Activated CD4-positive, alpha-beta memory T cell treated with anti-CD3 and anti-CD28 coated beads for 36 hours (primary cell): ENCODE measurements at regions of chr4 and their contacts with region 1.

Region 1: GRCh38 chr4:147866532-147867271 is 134.8 kb downstream of the ARHGAP10 start:
- DNase-seq: peak; percentile 94
- H3K4me3 Mint-ChIP-seq: no peak overlapping the region
- H3K27ac Mint-ChIP-seq: no peak overlapping the region
- H3K4me1 Mint-ChIP-seq: peaks cover 7% of the 10 kb centered on the region
- H3K27me3 Mint-ChIP-seq: no peaks in the 10 kb centered on the region

Region 2: DNA sequence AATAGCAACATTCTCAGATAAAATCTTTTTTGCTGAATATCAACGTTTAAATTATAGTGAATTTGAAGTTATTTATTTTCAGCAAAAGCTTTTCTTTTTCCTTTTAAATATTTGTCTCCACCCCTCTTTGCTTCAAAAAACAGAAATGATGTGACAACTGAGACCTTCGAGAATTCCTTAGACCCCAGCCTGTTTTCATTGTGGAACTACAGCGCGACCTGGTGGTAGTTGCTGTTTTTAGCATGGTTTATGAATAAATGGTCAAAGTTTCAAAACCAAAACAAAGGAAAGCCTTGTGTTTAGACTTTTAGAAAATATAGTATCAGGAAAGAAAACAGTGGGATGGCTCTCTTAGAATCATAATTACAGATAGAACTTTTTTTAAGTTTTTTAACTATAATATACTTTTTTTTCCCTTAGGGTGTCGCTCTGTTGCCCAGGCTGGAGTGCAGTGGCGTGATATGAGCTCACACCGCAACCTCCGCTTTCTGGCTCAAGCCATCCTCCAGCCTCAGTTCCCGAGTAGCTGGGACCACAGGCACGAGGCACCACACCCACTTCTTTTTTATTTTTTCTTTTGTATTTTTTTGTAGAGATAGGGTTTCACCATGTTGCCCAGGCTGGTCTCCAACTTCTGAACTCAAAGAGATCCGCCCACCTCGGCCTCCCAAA is 276.3 kb before region 1 on chr4:
- CTCF ChIA-PET with region 1: interaction called, 34 read pairs
- POLR2A ChIA-PET with region 1: no interaction called
- intact Hi-C with region 1: no loop called
- DNase-seq: peak; percentile 60
- H3K4me3 Mint-ChIP-seq: no peak overlapping the region
- H3K27ac Mint-ChIP-seq: no peak overlapping the region
- H3K4me1 Mint-ChIP-seq: peaks cover 2% of the 10 kb centered on the region
- H3K27me3 Mint-ChIP-seq: peaks cover 5% of the 10 kb centered on the region

Region 3: DNA sequence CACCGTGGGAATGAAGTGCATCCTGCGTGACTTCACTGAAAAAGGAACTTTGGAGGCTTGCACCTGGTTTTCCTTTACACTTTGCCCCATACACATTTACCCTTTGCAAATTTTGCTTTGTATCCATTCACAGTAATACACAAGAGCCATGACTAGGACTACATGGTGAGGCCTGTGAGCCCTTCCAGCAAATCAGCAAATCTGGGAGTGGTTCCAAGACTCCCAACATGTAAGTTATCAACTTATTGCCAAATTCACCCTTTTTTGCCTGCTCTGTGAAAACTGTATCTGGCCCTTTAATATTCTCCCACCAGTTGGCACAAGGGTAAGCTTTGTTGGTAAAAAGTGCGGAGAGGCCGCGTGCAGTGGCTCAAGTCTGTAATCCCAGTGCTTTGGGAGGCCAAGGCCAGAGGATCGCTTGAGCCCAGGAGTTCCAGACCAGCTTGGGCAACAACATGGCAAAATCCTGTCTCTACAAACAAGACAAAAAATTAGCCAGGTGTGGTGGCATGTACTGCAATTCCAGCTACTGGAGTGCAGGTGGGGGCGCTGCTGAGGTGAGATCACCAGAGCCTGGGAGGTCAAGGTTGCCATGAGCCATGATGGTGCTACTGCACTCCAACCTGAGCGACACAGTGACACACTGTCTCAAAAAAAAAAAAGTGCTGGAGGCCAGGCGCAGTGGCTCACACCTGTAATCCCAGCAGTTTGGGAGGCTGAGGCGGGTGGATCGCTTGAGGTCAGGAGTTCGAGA is 187.7 kb before region 1 on chr4:
- CTCF ChIA-PET with region 1: interaction called, 60 read pairs
- POLR2A ChIA-PET with region 1: no interaction called
- intact Hi-C with region 1: loop called (anchors 1 kb)
- DNase-seq: peak; percentile 35
- H3K4me3 Mint-ChIP-seq: no peak overlapping the region
- H3K27ac Mint-ChIP-seq: no peak overlapping the region
- H3K4me1 Mint-ChIP-seq: peaks cover 18% of the 10 kb centered on the region
- H3K27me3 Mint-ChIP-seq: no peaks in the 10 kb centered on the region

Region 4: DNA sequence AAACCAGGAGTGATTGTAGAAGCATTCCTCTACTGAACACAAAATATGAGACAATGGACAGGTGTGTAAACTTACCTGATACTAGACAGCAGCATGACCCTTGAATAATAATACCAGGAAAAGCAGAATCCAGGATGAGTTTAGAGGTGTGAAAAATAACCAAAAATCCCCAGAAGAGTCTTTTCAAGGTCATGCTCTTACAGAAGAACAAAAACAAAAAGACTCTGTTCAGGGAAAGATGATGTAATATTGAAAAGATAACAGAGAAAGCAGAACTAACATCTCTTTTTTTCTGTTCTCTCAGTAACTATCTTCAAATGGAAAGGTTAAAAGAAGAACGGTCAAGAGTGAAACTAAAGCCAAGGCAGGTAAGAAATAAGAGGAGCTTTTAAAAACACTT is 148.8 kb before region 1 on chr4:
- CTCF ChIA-PET with region 1: interaction called, 224 read pairs
- POLR2A ChIA-PET with region 1: no interaction called
- intact Hi-C with region 1: no loop called
- DNase-seq: no peak
- H3K4me3 Mint-ChIP-seq: no peak overlapping the region
- H3K27ac Mint-ChIP-seq: no peak overlapping the region
- H3K4me1 Mint-ChIP-seq: peaks cover 4% of the 10 kb centered on the region
- H3K27me3 Mint-ChIP-seq: peaks cover 5% of the 10 kb centered on the region

Region 5: DNA sequence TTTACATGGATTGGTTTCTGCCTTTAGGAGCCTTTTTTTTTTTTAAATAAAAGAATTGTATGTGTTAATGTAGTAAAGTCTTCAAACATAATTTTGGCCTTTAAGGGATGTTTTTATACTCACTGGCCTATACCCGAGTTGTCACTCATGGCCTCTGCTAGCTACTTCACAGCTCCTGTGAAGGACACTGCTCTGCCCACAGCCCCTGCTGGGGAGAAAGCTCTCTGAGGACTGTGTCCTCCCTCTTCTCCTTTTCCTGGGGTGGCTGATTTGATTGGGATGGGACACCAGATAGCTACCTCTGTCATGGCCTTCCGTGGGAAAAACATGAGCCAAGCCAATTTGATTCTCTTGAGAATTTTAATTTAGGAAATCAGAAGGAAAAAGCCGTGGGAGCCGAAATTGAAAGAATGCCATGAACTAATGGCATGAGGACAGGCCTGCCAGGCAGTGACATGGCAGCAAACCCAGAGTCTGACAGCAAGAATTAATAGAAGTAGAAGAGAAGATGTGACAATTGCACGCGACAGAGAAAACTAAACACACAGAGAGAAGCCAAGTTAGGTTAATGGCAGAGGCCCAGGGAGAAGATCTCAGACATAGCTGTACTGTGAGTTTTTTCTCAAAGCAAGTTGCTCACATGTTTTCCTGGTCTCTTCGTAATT is 53.5 kb before region 1 on chr4:
- CTCF ChIA-PET with region 1: interaction called, 17 read pairs
- POLR2A ChIA-PET with region 1: no interaction called
- intact Hi-C with region 1: no loop called
- DNase-seq: no peak
- H3K4me3 Mint-ChIP-seq: no peak overlapping the region
- H3K27ac Mint-ChIP-seq: no peak overlapping the region
- H3K4me1 Mint-ChIP-seq: peaks cover 17% of the 10 kb centered on the region
- H3K27me3 Mint-ChIP-seq: no peaks in the 10 kb centered on the region

Region 6: GRCh38 chr4:147879676-147880075 is 13.0 kb after region 1 on chr4:
- CTCF ChIA-PET with region 1: interaction called, 40 read pairs
- POLR2A ChIA-PET with region 1: no interaction called
- intact Hi-C with region 1: no loop called
- DNase-seq: no peak
- H3K4me3 Mint-ChIP-seq: no peak overlapping the region
- H3K27ac Mint-ChIP-seq: no peak overlapping the region
- H3K4me1 Mint-ChIP-seq: no peaks in the 10 kb centered on the region
- H3K27me3 Mint-ChIP-seq: no peaks in the 10 kb centered on the region